ENCODE measurements at regions of chr17 and their contacts with region 1.

Region 1: GRCh38 chr17:74659898-74660297 is 36.4 kb upstream of the CD300E start:
- DNase-seq: no peak
- ATAC-seq: no peak
- H3K4me3 ChIP-seq: no peak overlapping the region
- H3K27ac ChIP-seq: no peak overlapping the region
- H3K4me1 ChIP-seq: no peaks in the 10 kb centered on the region
- H3K27me3 ChIP-seq: peaks cover 37% of the 10 kb centered on the region
- CTCF ChIP-seq: no peak
- POLR2A ChIP-seq: no peak
- RAD21 ChIP-seq: no peak

Region 2: DNA sequence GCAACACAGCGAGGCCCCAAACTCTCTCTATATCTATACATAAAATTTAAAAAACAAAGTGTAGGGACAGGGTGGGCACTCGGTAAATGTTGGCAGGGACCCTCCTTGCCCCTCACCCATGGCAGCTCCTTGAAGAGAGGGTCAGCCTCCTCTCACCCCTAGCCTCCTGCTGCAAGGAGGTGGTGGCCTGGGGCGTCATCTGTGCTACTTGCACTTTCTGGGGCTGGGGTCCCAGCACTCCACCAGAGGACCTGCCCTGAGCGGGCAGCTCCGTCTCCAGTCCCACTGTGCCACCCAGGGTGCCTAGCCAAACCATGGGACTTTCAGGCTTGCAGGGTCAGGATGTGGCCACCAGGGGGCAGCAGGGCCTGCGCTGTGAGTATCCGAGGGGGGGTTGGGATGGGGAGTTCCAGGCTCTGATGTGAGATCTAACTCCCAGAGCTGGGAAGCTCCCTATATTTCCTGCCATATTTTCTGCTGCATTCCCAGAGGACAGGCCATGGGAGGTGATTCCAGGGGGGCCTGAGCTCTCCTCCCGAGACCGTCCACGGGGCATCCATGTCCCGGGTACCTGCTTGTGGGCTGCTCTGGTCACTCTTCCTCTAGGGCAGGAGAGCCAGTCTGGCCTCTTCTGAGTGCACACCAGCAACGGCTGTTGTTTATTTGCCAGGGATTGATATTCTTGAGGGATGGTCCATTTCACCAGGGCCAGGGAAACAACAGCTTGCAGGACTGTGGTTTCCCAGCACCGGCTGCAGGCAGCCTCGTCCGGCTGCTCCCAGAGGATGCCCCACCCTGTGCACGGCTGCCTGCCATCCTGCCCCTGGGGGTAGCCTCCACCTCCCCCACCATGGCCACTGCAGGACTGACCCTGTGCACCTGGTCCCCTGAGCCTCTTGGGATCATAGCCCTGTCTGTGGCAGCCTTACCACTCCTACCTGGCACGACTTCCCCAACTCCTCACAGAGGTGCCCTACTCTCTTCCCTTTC is 291.5 kb before region 1 on chr17:
- CTCF ChIA-PET with region 1: interaction called, 10 read pairs
- POLR2A ChIA-PET with region 1: no interaction called
- RAD21 ChIA-PET with region 1: no interaction called
- intact Hi-C with region 1: no loop called
- DNase-seq: peak; percentile 67
- ATAC-seq: peak; percentile 95
- H3K4me3 ChIP-seq: no peak overlapping the region
- H3K27ac ChIP-seq: no peak overlapping the region
- H3K4me1 ChIP-seq: peaks cover 2 to 13% of the 10 kb centered on the region in 2 experiments; a peak in 2 of 4 replicates
- H3K27me3 ChIP-seq: no peaks in the 10 kb centered on the region
- CTCF ChIP-seq: peak; percentile 96 to 100 (median 99)
- POLR2A ChIP-seq: no peak
- RAD21 ChIP-seq: peak; percentile 94

Region 3: DNA sequence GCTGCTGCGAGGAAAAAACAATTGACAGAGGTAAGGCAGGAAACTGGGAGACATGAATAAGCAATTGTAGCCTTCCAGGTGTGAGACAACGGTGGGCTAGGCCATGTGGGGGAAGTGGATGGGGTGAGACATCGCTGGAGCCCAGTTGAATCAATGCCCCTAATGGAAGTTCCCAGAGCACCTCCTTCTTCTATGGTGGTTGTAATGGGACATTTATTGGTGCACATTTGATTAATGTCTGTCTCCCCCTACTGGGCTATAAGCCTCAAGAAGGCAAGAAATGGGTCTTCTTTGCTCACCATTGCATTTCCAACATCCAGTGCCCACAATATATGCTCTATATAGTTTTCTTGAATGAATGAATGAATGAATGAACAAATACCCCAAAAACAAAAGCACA is 13.7 kb before region 1 on chr17:
- CTCF ChIA-PET with region 1: interaction called, 16 read pairs
- POLR2A ChIA-PET with region 1: no interaction called
- RAD21 ChIA-PET with region 1: interaction called in 1 of 2 experiments, 3 read pairs
- intact Hi-C with region 1: no loop called
- DNase-seq: peak; percentile 54
- ATAC-seq: peak; percentile 86
- H3K4me3 ChIP-seq: no peak overlapping the region
- H3K27ac ChIP-seq: no peak overlapping the region
- H3K4me1 ChIP-seq: no peaks in the 10 kb centered on the region
- H3K27me3 ChIP-seq: peaks cover 79% of the 10 kb centered on the region
- CTCF ChIP-seq: peak; percentile 65 to 75 (median 66); a peak in 5 of 6 replicates
- POLR2A ChIP-seq: no peak
- RAD21 ChIP-seq: peak; percentile 71

Region 4: GRCh38 chr17:74736513-74737298 is 76.8 kb after region 1 on chr17 and contains the start of gene RAB37:
- CTCF ChIA-PET with region 1: interaction called, 253 read pairs
- POLR2A ChIA-PET with region 1: interaction called, 25 read pairs
- RAD21 ChIA-PET with region 1: interaction called, 41 to 52 read pairs
- intact Hi-C with region 1: loop called (anchors 1 kb)
- DNase-seq: peak; percentile 47
- ATAC-seq: peak; percentile 79
- H3K4me3 ChIP-seq: peak within 1 kb of the TSS; percentile 69 to 76
- H3K27ac ChIP-seq: peak within 1 kb of the TSS; percentile 68
- H3K4me1 ChIP-seq: peaks cover 20 to 27% of the 10 kb centered on the region in 2 experiments
- H3K27me3 ChIP-seq: no peaks in the 10 kb centered on the region
- CTCF ChIP-seq: peak; percentile 62 to 84 (median 72)
- POLR2A ChIP-seq: peak; percentile 25
- RAD21 ChIP-seq: peak; percentile 82
- total RNA-seq, gene RAB37: 8.2 TPM

Region 5: GRCh38 chr17:74748529-74749365 is 88.8 kb after region 1 on chr17 and contains the start of gene NHERF1:
- CTCF ChIA-PET with region 1: interaction called, 28 read pairs
- POLR2A ChIA-PET with region 1: no interaction called
- RAD21 ChIA-PET with region 1: interaction called, 3 to 4 read pairs
- intact Hi-C with region 1: no loop called
- DNase-seq: peak; percentile 77
- ATAC-seq: peak; percentile 90
- H3K4me3 ChIP-seq: peak within 1 kb of the TSS; percentile 74 to 90
- H3K27ac ChIP-seq: peak within 1 kb of the TSS; percentile 81
- H3K4me1 ChIP-seq: peaks cover 35 to 61% of the 10 kb centered on the region in 2 experiments
- H3K27me3 ChIP-seq: no peaks in the 10 kb centered on the region
- CTCF ChIP-seq: peak in 2 of 3 experiments; percentile 17 to 19; a peak in 2 of 6 replicates
- POLR2A ChIP-seq: peak; percentile 97
- RAD21 ChIP-seq: no peak
- total RNA-seq, gene NHERF1: 129 TPM

Region 6: GRCh38 chr17:74776044-74776977 is 116.4 kb after region 1 on chr17 and contains the start of gene NAT9:
- CTCF ChIA-PET with region 1: interaction called, 22 read pairs
- POLR2A ChIA-PET with region 1: interaction called, 3 read pairs
- RAD21 ChIA-PET with region 1: interaction called in 1 of 2 experiments, 4 read pairs
- intact Hi-C with region 1: loop called (anchors 2 kb)
- DNase-seq: peak; percentile 92
- ATAC-seq: peak; percentile 85
- H3K4me3 ChIP-seq: peak within 1 kb of the TSS; percentile 75 to 79
- H3K27ac ChIP-seq: peak within 1 kb of the TSS; percentile 60
- H3K4me1 ChIP-seq: peaks cover 9 to 16% of the 10 kb centered on the region in 2 experiments
- H3K27me3 ChIP-seq: no peaks in the 10 kb centered on the region
- CTCF ChIP-seq: no peak
- POLR2A ChIP-seq: peak; percentile 82
- RAD21 ChIP-seq: no peak
- total RNA-seq, gene NAT9: 88.7 TPM